ENCODE measurements at regions of chr2 and their contacts with region 1.

Region 1: DNA sequence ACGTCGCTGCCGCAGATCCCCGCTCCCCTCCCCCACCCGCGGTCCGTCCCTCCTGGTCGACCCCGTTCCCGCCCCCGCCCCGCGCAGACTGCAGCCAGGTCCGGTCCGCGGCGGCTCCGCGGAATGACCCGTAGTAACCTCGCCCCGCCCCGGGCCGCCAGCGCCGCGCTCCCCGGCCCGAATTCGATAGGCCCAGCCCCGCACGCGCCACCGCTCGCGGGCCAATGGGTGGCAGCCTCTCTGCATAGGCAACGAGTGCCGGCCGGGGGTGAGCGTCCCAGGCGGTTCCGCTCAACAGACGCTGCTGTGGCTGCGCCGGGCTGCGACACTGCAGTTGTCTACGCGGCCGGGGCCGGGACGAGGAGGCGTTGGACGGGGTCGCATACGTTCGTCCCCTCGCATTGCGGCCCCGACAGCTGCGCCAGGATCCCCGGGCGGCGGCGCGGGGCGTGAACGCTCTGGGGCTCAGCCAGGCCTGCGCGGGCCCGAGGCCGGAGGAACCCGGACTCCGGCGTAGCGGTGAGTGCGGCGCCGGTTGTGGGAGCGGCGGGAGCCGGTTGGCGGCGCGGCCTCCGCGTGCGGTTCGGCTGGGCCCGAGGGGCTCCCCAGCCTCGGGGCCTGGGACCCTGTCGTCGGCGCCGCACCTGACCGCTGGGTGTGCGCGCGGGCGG is at the start of gene ACSL3:
- DNase-seq: peak; percentile 96
- ATAC-seq: peak; percentile 99
- H3K4me3 Mint-ChIP-seq: peak within 1 kb of the TSS; percentile 73
- H3K27ac Mint-ChIP-seq: peak within 1 kb of the TSS; percentile 85
- H3K4me1 Mint-ChIP-seq: peaks cover 8% of the 10 kb centered on the region
- H3K27me3 Mint-ChIP-seq: peaks cover 22% of the 10 kb centered on the region
- total RNA-seq, gene ACSL3: 47.7 to 50.9 TPM

Region 2: DNA sequence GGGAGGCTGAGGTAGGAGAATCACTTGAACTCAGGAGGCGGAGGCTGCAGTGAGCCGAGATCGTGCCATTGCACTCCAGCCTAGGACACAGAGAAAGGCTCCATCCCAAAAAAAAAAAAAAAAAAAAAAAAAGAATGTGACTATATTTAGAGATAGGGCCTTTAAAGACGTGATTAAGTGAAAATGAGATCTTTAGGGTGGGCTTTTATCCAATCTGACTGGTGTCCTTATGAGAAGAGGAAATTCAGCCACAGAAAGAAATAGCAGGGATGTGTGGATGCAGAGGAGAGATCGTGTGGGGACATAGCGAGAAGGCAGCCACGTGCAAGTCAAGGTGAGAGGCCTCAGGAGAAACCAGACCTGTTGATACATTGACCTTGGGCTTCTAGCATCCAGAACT is 69.9 kb before region 1 on chr2:
- POLR2A ChIA-PET with region 1: interaction called, 13 read pairs
- DNase-seq: no peak
- ATAC-seq: no peak
- H3K4me3 Mint-ChIP-seq: no peak overlapping the region
- H3K27ac Mint-ChIP-seq: peak overlapping the region; percentile 95
- H3K4me1 Mint-ChIP-seq: peaks cover 11% of the 10 kb centered on the region
- H3K27me3 Mint-ChIP-seq: no peaks in the 10 kb centered on the region

Region 3: DNA sequence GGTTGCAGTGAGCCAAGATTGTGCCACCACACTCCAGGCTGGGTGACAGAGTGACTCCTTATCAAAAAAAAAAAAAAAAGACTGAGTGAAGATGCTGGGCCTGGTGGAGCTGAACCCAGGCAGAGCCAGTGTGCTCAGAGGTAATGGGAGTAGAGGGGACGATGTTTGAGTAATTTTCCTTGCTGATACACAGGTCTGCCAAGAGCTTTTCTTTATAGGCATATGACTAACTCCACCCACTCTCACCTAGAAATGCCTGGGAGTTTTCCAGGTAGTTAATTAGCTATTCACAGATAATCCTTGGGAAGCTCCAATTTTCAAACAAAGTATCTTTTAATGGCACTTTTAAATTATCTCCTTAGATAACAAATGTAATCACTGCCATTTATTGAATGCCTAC is 33.5 kb before region 1 on chr2:
- POLR2A ChIA-PET with region 1: no interaction called
- DNase-seq: no peak
- ATAC-seq: no peak
- H3K4me3 Mint-ChIP-seq: no peak overlapping the region
- H3K27ac Mint-ChIP-seq: no peak overlapping the region
- H3K4me1 Mint-ChIP-seq: no peaks in the 10 kb centered on the region
- H3K27me3 Mint-ChIP-seq: peaks cover 20% of the 10 kb centered on the region

Region 4: DNA sequence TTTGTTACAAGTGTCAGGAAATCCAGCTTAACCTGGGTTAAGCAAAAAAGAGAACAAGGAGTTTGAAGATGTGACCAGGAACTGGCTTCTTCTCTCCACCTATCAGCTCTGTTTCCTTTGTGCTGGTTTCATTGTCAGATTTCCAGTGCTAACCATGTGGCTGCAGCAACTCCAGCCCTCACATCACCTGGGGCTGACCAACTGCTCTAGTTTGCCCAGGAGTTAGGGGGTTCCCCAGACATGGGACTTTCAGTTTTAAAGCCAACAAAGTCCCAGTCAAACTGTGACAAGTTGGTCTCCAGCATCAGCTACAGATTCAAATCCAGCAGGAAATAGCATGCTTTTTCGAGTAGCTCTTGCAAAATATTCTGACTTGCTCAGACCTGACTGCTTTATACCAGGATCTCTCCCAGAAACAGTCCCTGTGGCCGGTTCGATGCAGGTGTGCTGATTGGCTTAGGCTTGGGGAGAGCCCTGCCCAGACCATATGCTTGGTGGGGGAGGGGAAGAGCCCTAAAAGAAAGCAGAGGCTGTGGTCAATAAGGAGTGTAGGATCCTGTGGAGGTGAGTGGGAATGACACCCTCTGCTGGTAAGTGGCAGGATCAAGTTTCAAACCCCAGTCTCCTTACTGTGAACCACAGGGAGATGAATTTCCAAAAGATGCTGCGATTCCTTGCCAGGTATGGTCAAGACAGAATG is 240.6 kb after region 1 on chr2:
- POLR2A ChIA-PET with region 1: no interaction called
- DNase-seq: no peak
- ATAC-seq: no peak
- H3K4me3 Mint-ChIP-seq: no peak overlapping the region
- H3K27ac Mint-ChIP-seq: no peak overlapping the region
- H3K4me1 Mint-ChIP-seq: no peaks in the 10 kb centered on the region
- H3K27me3 Mint-ChIP-seq: peaks cover 2% of the 10 kb centered on the region